ENCODE measurements at regions of chr3 and their contacts with region 1.

Region 1: GRCh38 chr3:150721285-150722130 is 17.8 kb upstream of the ERICH6 start:
- H3K4me3 ChIP-seq: no peak overlapping the region
- H3K27ac ChIP-seq: no peak overlapping the region
- H3K4me1 ChIP-seq: no peaks in the 10 kb centered on the region; the same call in 1 of the 2 replicates
- CTCF ChIP-seq: no peak; the same call in 1 of the 2 replicates

Region 2: DNA sequence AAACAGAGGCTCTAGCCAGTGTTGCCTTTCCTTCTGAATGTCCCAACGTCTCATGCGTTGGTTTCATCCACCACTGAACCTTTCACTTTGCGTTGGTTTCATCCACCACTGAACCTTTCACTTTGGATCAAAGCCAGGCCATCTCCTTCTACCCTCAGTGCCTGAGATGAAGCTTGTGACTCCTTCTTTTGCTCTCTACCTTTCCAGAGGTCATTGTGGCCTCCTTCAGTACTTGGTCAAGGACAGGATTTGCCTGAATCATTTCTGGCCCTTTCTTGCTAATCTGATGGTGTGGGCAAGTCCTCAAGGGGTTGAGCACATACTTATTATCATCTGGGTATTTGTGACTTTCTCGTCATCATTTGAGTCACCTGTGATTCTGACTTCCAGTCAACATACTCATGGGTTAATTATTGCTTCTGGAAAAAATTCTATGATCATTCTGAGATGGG is 68.4 kb before region 1 on chr3:
- CTCF ChIA-PET with region 1: no interaction called
- POLR2A ChIA-PET with region 1: no interaction called
- H3K4me3 ChIP-seq: no peak overlapping the region
- H3K27ac ChIP-seq: no peak overlapping the region
- H3K4me1 ChIP-seq: no peaks in the 10 kb centered on the region
- CTCF ChIP-seq: no peak

Region 3: GRCh38 chr3:150787741-150788370 is 66.3 kb after region 1 on chr3:
- CTCF ChIA-PET with region 1: interaction called, 22 read pairs
- POLR2A ChIA-PET with region 1: no interaction called
- H3K4me3 ChIP-seq: no peak overlapping the region
- H3K27ac ChIP-seq: no peak overlapping the region
- H3K4me1 ChIP-seq: no peaks in the 10 kb centered on the region
- CTCF ChIP-seq: peak; percentile 64

Region 4: DNA sequence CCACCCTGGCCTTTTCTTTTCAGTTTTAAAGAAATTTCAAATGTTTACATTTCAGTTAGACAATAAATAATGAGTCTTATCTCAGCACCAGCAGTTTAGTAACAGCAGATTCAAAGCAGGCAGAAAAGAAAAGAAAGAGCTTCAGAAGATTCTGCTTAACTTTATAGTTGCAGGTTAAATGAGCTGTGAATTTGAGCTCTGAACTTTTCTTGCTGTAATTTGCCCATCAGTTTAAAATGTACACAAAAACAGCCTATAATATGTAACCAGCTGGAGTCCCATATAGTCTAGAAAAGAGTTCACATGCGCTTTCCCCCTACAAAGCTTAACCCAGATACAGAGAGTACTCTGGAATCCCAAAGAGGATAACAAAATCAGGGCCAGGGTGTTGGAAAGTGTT is 101.1 kb after region 1 on chr3:
- CTCF ChIA-PET with region 1: no interaction called
- POLR2A ChIA-PET with region 1: no interaction called
- H3K4me3 ChIP-seq: no peak overlapping the region
- H3K27ac ChIP-seq: no peak overlapping the region
- H3K4me1 ChIP-seq: no peaks in the 10 kb centered on the region
- CTCF ChIP-seq: no peak

Region 5: DNA sequence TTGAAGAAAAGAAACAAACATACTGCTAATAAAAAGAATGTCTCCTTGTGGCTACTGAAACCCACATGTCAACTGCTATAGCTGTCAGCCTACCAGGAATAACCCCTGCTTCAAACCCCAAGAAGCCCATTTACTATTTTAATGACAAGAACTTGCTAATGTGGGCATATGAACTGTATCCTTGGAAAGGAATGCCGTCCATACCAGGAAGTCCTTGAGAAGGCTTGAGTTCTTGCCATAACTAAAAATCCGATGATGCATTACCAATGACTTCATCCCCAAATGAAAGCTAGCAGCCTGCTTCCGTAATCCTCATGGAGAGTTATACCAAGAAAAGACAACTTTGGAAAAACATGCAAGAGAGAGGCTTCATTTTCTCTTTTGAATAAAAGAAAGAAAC is 148.9 kb after region 1 on chr3:
- CTCF ChIA-PET with region 1: interaction called, 13 read pairs
- POLR2A ChIA-PET with region 1: no interaction called
- H3K4me3 ChIP-seq: no peak overlapping the region
- H3K27ac ChIP-seq: no peak overlapping the region
- H3K4me1 ChIP-seq: no peaks in the 10 kb centered on the region
- CTCF ChIP-seq: no peak

Region 6: GRCh38 chr3:151142929-151143328 is 421.4 kb after region 1 on chr3:
- CTCF ChIA-PET with region 1: interaction called, 10 read pairs
- POLR2A ChIA-PET with region 1: no interaction called
- H3K4me3 ChIP-seq: no peak overlapping the region
- H3K27ac ChIP-seq: no peak overlapping the region
- H3K4me1 ChIP-seq: peaks cover 8% of the 10 kb centered on the region
- CTCF ChIP-seq: no peak